Heart right ventricle (tissue), 16 donors: ENCODE measurements at regions of chr4 and their contacts with region 1.

Region 1: DNA sequence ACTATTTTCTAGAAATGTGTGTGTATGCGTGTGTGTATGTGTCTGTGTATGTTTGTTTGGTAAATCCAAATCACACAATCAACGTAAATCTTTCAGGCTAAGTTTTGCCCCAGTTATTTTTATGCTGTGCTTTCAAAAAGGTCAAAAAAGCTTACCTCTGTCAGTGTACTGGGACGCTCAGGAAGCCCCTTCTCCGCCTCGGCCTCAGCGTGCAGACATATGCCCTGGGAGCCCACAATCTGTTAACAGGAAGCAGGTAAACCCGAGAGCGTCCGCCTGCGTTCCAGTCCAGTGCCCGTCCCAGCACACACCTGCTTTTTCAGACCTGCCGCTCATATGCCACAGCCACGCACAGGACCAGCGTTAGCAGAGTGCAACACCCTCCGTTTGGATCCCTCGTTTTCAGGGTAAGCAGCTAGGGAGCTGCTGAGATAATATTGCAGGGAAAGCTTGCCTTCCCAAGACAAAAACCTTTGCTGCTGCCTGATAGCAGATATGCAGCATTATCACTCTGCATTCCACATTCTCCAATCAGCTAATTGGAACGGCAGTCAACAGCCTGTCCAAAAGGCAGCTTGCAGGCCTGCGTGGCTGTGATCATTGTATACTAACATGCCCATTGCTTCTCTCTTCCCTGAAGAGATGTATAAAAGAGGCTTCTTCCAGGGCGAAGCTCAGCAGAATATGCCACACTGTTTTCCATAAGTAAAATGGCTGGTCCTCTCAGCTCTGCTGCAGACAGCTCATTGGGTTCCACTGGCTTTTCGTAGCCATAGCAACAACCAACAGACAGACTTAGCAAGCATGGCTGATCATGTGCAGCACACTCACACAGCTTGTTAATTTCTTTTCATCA is at the start of gene SORBS2:
- DNase-seq: peak; percentile 18 to 35
- ATAC-seq: peak; percentile 59 to 88 (median 78)
- H3K4me3 ChIP-seq: peak within 1 kb of the TSS; percentile 36 to 68 (median 55)
- H3K27ac ChIP-seq: peak within 1 kb of the TSS; percentile 75 to 91 (median 86)
- H3K4me1 ChIP-seq: peaks cover 0 to 11% (median 0%) of the 10 kb centered on the region in 9 donors
- H3K27me3 ChIP-seq: no peaks in the 10 kb centered on the region
- CTCF ChIP-seq: no peak
- total RNA-seq, gene SORBS2: 975 to 3,169 (median 1,932) TPM

Region 2: DNA sequence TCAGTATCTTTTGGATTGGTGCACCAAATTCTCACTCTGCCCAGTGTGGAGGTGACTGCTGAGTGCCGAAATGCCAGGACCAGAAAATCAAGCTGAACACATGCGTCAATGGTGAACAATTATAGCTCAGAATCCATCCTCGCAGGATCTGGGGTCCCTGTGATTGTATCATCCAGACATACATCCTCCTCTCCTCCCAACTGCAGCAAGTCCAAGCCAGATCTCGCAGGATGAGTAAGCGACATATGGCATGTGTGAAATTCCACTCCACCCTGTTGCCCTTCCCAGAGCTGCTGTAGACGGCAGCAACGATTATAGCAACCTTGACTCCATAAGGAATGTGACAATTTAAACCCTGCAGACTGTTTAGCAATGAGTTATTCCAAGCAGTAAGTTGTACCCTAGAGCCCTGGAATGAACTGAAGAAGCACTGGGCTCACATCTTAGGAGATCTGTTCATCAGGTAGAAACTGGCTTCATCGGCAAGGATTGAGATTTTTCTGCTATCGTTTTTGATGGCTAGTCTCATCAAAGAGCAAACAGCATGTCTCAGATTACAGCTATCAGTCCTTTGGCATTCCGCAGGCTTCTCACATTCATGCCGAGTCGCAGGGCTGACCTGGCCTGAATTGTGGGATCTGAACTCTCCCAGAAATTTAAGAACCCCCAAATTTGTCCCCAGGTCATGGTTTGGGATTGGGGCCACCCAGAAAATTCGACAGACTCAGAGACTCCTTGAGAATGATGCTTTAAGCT is 35.8 kb after region 1 on chr4:
- intact Hi-C with region 1: loop called in 2 of 10 experiments (anchors 5 kb)
- DNase-seq: peak; percentile 65 to 79
- ATAC-seq: peak; percentile 53 to 94 (median 90)
- H3K4me3 ChIP-seq: no peak overlapping the region
- H3K27ac ChIP-seq: peak overlapping the region; percentile 7 to 95 (median 78)
- H3K4me1 ChIP-seq: peaks cover 5 to 36% (median 24%) of the 10 kb centered on the region in 9 donors
- H3K27me3 ChIP-seq: no peaks in the 10 kb centered on the region
- CTCF ChIP-seq: no peak

Region 3: GRCh38 chr4:185865901-185866328 is 54.2 kb after region 1 on chr4:
- intact Hi-C with region 1: loop called in 2 of 10 experiments (anchors 5 kb)
- DNase-seq: no peak
- ATAC-seq: peak in 6 of 8 donors; percentile 50 to 85 (median 74)
- H3K4me3 ChIP-seq: no peak overlapping the region
- H3K27ac ChIP-seq: peak overlapping the region; percentile 53 to 89 (median 83)
- H3K4me1 ChIP-seq: peaks cover 0 to 67% (median 17%) of the 10 kb centered on the region in 9 donors
- H3K27me3 ChIP-seq: no peaks in the 10 kb centered on the region
- CTCF ChIP-seq: no peak